ENCODE measurements at regions of chr5 and their contacts with region 1.

Region 1: GRCh38 chr5:59174248-59174844 is 591.5 kb downstream of the RAB3C start:
- DNase-seq: peak; percentile 50
- H3K4me3 Mint-ChIP-seq: no peak overlapping the region
- H3K27ac Mint-ChIP-seq: no peak overlapping the region
- H3K4me1 Mint-ChIP-seq: peaks cover 49% of the 10 kb centered on the region
- H3K27me3 Mint-ChIP-seq: peaks cover 5% of the 10 kb centered on the region

Region 2: GRCh38 chr5:58886315-58887207 is 287.8 kb before region 1 on chr5:
- CTCF ChIA-PET with region 1: interaction called, 45 read pairs
- DNase-seq: peak; percentile 73
- H3K4me3 Mint-ChIP-seq: no peak overlapping the region
- H3K27ac Mint-ChIP-seq: peak overlapping the region; percentile 56
- H3K4me1 Mint-ChIP-seq: peaks cover 29% of the 10 kb centered on the region
- H3K27me3 Mint-ChIP-seq: peaks cover 21% of the 10 kb centered on the region

Region 3: DNA sequence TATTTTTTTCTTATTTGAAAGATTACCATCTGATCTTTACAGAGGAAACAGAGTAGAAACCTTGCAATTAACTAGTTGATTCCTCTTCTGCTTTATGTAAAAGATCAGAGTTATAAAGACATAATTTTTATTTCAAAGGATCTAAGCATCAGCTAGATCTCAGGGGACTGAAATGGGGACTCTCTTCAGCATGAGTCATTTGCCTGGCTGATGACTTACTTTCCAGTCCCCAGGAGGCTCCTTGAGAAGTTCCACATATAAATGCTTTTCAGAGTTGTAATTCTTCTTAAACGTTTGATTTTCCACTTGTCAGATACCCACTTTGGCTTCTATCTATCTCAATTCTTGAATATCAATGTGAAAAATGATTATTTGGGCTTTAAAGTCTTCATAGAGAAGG is 202.0 kb before region 1 on chr5:
- CTCF ChIA-PET with region 1: interaction called, 10 read pairs
- DNase-seq: no peak
- H3K4me3 Mint-ChIP-seq: no peak overlapping the region
- H3K27ac Mint-ChIP-seq: no peak overlapping the region
- H3K4me1 Mint-ChIP-seq: peaks cover 4% of the 10 kb centered on the region
- H3K27me3 Mint-ChIP-seq: no peaks in the 10 kb centered on the region

Region 4: GRCh38 chr5:59042201-59043055 is 131.9 kb before region 1 on chr5:
- CTCF ChIA-PET with region 1: interaction called, 136 read pairs
- DNase-seq: peak; percentile 27
- H3K4me3 Mint-ChIP-seq: no peak overlapping the region
- H3K27ac Mint-ChIP-seq: peak overlapping the region; percentile 53
- H3K4me1 Mint-ChIP-seq: peaks cover 29% of the 10 kb centered on the region
- H3K27me3 Mint-ChIP-seq: peaks cover 5% of the 10 kb centered on the region

Region 5: GRCh38 chr5:59152701-59153245 is 21.6 kb before region 1 on chr5:
- CTCF ChIA-PET with region 1: interaction called, 17 read pairs
- DNase-seq: no peak
- H3K4me3 Mint-ChIP-seq: peak overlapping the region; percentile 37
- H3K27ac Mint-ChIP-seq: no peak overlapping the region
- H3K4me1 Mint-ChIP-seq: peaks cover 4% of the 10 kb centered on the region
- H3K27me3 Mint-ChIP-seq: no peaks in the 10 kb centered on the region

Region 6: GRCh38 chr5:59206132-59206581 is 31.8 kb after region 1 on chr5:
- CTCF ChIA-PET with region 1: no interaction called
- DNase-seq: no peak
- H3K4me3 Mint-ChIP-seq: no peak overlapping the region
- H3K27ac Mint-ChIP-seq: no peak overlapping the region
- H3K4me1 Mint-ChIP-seq: no peaks in the 10 kb centered on the region
- H3K27me3 Mint-ChIP-seq: peaks cover 10% of the 10 kb centered on the region

Region 7: DNA sequence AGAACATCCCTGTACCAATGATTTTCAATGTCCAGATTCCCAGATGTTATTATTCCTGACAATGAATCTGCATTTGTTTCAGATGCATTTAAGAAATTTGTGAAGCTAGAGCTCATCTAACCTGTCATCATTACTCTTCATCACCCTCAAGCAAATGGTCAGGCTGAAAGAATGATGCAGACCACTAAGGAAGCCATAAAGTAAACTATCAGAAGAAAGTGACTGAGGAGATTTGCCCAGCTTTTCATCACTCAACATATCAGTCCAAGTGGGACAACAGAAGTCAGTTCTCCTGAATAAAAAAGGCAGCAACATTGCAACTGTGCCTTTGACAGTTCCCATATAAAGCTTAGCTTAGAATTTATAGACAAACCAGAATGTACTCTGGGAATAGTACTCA is 299.3 kb after region 1 on chr5:
- CTCF ChIA-PET with region 1: no interaction called
- DNase-seq: no peak
- H3K4me3 Mint-ChIP-seq: no peak overlapping the region
- H3K27ac Mint-ChIP-seq: no peak overlapping the region
- H3K4me1 Mint-ChIP-seq: no peaks in the 10 kb centered on the region
- H3K27me3 Mint-ChIP-seq: no peaks in the 10 kb centered on the region

Measured in activated naive CD4-positive, alpha-beta T cell treated with anti-CD3 and anti-CD28 coated beads, Interleukin-2, amount 10 ng/mL, durations not matched to agents 7 days and 5 days (primary cell).